ENCODE measurements at regions of chr14 and their contacts with region 1.

Region 1: DNA sequence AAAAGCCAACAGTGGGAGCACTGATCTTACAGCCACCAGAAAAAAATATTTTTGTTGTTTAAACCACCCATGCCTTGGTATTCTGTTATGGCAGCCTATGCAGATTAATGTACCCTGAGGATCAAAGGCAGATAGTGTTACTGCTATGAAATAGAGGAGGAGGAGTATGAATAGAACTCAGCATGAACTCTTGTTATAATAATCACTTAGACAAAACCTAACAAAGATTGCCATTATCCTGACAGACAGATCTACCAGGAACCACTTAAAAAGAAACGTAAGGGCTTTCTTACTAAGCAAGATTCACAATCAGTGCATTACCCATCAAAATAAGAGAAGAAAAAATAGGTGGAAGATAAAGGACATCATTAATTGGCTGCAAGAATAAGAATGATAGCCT is 558.3 kb downstream of the GALC start:
- DNase-seq: no peak
- H3K4me3 ChIP-seq: no peak overlapping the region
- H3K27ac ChIP-seq: no peak overlapping the region
- H3K4me1 ChIP-seq: no peaks in the 10 kb centered on the region
- H3K27me3 ChIP-seq: no peaks in the 10 kb centered on the region
- CTCF ChIP-seq: no peak
- EP300 ChIP-seq: no peak
- POLR2A ChIP-seq: no peak

Region 2: GRCh38 chr14:88863167-88863684 is 1428.5 kb after region 1 on chr14:
- intact Hi-C with region 1: loop called in 1 of 4 experiments (anchors 5 kb)
- DNase-seq: no peak
- H3K4me3 ChIP-seq: no peak overlapping the region
- H3K27ac ChIP-seq: no peak overlapping the region
- H3K4me1 ChIP-seq: peaks cover 2% of the 10 kb centered on the region
- H3K27me3 ChIP-seq: no peaks in the 10 kb centered on the region
- CTCF ChIP-seq: no peak
- EP300 ChIP-seq: no peak
- POLR2A ChIP-seq: no peak